ENCODE measurements at regions of chr12 and their contacts with region 1.

Region 1: DNA sequence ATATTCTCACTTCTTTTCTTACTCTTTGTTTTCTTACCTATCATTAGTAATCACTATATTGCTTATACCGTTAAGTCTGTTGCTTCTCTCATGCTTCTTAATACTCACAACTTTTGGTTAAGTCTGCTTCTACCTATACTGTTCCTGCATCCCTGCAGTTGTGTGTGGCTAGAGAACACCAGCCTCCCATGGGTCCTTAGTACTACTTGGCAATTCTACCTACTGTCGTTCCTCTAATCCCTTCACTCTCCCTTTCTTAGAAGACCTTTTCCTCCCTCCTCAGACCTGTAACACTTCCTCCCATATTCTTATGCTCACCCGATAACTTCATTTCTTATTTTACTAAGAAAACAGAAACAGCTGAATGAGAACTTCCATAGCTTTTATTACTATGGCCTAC is 29.3 kb downstream of the CNOT2 start:
- DNase-seq: no peak
- ATAC-seq: no peak

Region 2: DNA sequence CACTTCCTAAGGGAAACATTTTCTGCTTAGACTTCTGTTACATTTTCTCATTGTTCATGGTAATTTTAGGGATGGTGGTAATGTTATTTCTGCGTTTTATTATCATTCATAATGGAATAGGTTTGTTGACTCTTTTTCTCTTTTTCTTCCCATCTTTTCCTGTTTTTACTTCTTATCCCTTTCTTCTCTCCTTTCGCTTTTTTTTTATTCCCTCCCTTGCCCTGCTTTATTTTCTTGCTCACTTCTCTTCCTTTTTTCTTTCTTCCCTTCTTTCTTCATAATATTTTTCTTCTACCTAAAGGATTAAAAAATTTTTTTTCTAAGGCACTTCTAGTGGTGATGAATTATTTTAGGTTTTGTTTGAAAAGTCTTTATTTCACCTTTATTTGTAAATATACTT is 16.3 kb after region 1 on chr12:
- intact Hi-C with region 1: loop called in 1 of 2 experiments (anchors 1 kb)
- DNase-seq: no peak
- ATAC-seq: no peak